ENCODE measurements at regions of chr17 and their contacts with region 1.

Region 1: GRCh38 chr17:28750178-28751047 is 6.6 kb downstream of the TRAF4 start:
- DNase-seq: no peak
- H3K4me3 ChIP-seq: no peak overlapping the region
- CTCF ChIP-seq: peak; percentile 100

Region 2: GRCh38 chr17:28563475-28563874 is 186.9 kb before region 1 on chr17:
- CTCF ChIA-PET with region 1: no interaction called
- POLR2A ChIA-PET with region 1: no interaction called
- DNase-seq: peak; percentile 23
- H3K4me3 ChIP-seq: no peak overlapping the region
- CTCF ChIP-seq: no peak

Region 3: DNA sequence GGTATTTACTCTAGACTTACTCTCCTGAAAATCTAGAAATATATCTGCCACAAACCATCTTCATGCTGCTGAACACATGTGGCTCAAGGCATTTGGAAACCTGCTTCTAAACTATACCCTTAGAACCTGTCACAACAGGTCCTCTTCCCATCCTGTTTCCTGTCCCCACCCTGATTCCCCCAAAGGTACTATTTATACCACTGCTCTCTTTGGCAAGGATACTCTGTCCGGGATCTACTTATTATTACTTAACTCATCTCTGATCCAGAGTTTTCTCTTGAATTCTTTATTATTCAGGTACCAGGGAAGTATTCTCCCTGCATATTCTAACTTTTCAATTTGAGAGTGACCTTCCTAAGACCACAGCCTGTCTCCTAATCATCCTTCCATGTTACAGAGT is 26.8 kb after region 1 on chr17:
- CTCF ChIA-PET with region 1: interaction called, 12 read pairs
- POLR2A ChIA-PET with region 1: no interaction called
- DNase-seq: no peak
- H3K4me3 ChIP-seq: no peak overlapping the region
- CTCF ChIP-seq: no peak

Region 4: DNA sequence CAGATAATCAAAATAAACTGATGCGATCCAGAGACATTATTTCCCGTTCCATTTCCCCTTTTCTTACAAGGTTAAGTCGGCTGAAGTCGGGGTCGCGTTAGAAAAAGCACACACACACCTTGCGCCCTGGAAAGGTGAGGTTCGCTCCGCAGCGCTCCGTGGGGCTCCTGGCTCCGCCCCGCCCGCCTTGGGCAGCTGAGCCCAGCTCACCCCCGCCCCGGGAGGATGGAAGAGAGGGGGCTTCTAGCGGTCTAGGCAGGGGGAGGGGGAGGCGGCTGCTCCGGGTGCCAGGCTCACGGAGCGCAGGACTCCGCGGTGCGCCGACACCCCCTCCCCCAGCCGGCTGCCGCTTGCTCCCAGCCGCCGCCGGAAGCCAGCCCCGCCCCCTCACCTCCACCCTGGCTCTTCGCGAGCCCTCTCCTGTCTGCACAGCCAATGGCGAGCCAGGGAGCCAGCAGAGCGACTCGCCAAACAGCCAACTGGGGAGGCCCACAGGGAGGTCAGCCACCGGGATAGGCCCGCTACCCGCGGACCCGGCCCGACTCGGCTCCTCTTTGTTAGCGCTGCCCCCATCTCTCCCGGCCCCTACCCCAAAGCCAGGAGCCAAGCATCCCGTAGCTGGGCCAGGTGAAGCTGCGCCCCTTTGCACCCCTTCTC is 61.8 kb after region 1 on chr17:
- CTCF ChIA-PET with region 1: interaction called, 13 read pairs
- POLR2A ChIA-PET with region 1: interaction called, 4 read pairs
- DNase-seq: peak; percentile 70
- H3K4me3 ChIP-seq: peak overlapping the region; percentile 90
- CTCF ChIP-seq: no peak

Region 5: GRCh38 chr17:28878981-28879380 is 128.6 kb after region 1 on chr17:
- CTCF ChIA-PET with region 1: interaction called, 10 read pairs
- POLR2A ChIA-PET with region 1: no interaction called
- DNase-seq: no peak
- H3K4me3 ChIP-seq: no peak overlapping the region
- CTCF ChIP-seq: peak; percentile 63

Region 6: DNA sequence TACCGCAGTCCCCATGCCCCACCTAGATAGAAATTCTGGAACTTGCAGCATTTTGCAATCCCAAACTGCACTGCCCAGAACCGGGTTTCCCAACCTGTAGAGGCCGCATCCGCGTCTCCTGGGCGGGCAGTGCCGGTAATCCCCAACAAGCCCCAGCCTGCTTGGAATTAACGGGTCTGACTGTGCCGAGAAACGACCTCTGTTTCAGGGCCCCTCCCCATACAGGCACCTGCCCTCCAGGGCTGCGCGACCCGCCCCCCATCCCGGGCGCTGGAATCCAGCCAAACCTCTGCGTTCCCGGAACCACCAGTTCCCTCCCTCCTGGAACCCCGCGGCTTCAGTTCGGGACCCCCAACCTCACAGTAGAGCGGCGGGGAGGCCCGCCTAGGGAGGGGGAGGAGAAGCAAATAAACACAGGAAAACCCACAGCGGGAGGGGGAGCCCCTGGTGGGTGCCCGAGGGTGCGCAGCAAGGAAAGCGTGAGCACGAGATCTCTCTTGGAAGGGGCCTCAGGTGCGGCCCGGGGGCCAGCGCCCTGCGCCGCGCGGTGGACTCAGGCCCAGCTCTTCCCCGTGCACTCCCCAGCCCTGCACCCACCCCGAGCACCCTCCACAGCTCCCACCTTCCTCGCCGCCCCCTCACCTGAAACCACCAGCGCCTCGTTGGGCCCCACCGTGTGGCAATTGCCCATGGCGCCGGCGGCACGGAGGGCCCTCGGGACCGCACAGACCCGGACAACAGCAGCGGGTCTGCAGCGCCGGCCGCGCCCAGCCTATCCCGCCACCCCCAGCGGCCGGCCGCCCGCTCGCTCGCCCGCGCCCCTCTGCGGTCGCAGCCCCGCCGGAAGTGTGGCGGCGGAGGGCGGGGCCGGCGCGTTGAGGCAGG is 146.7 kb after region 1 on chr17 and contains the start of gene FLOT2:
- CTCF ChIA-PET with region 1: interaction called, 13 read pairs
- POLR2A ChIA-PET with region 1: no interaction called
- DNase-seq: no peak
- H3K4me3 ChIP-seq: peak within 1 kb of the TSS; percentile 85
- CTCF ChIP-seq: peak; percentile 46

Region 7: GRCh38 chr17:28908640-28909167 is 158.3 kb after region 1 on chr17:
- CTCF ChIA-PET with region 1: interaction called, 11 read pairs
- POLR2A ChIA-PET with region 1: interaction called, 3 read pairs
- DNase-seq: no peak
- H3K4me3 ChIP-seq: no peak overlapping the region
- CTCF ChIP-seq: no peak

Region 8: GRCh38 chr17:28916302-28916934 is 166.0 kb after region 1 on chr17:
- CTCF ChIA-PET with region 1: interaction called, 11 read pairs
- POLR2A ChIA-PET with region 1: no interaction called
- DNase-seq: no peak
- H3K4me3 ChIP-seq: no peak overlapping the region
- CTCF ChIP-seq: peak; percentile 44

Region 9: DNA sequence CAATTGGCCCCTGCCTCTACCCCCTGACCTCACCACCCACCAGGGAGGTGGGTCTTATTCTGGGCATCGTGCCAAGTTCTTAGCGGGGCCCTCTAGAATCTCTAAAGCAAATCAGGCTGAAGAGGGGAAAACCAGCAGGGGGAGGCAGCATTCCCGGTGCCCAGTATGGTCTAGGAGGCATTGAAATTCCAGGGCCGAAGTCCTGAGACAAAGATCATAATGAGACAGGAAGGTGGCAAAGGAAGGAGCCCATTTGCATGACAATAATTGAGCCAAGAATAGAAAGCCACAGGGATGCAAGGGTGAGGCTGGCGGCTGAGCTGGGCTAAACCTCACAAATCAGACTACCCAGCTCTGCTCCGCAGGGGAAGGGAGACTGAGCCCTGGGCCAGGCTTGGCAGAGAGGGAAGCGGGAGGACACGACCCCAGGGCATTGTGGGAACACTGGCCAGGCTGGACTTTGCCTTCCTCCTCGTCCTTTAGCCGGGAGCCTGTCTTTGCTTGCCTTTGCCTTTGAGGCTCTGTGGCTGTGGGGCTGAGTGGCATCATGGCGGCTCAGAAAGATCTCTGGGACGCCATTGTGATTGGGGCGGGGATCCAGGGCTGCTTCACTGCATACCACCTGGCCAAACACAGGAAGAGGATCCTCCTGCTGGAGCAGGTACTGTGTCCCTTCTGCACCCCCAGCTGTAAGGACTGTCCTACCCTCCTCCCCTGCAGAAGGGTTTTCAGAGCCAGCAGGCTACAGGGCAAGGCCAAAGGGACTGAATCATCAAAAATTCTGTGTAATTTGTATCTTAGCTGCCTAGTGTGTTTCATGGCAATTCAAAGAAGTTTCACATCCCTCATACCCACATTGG is 292.5 kb after region 1 on chr17 and contains the start of gene PIPOX:
- CTCF ChIA-PET with region 1: no interaction called
- POLR2A ChIA-PET with region 1: no interaction called
- DNase-seq: no peak
- H3K4me3 ChIP-seq: no peak within 1 kb of the TSS
- CTCF ChIP-seq: peak; percentile 5